AG04450 (cell line): ENCODE measurements at regions of chr12 and their contacts with region 1.

Region 1: GRCh38 chr12:49069507-49070346 is at the start of gene RHEBL1:
- DNase-seq: peak; percentile 78
- H3K4me3 ChIP-seq: peak within 1 kb of the TSS; percentile 82
- H3K27ac ChIP-seq: peak within 1 kb of the TSS; percentile 70
- H3K27me3 ChIP-seq: no peaks in the 10 kb centered on the region
- CTCF ChIP-seq: peak; percentile 16; the same call in 1 of the 2 replicates
- polyA plus RNA-seq, gene RHEBL1: 0.31 and 0.51 TPM in 2 replicates

Region 2: GRCh38 chr12:48991247-48992050 is 78.3 kb before region 1 on chr12:
- CTCF ChIA-PET with region 1: no interaction called
- POLR2A ChIA-PET with region 1: no interaction called
- DNase-seq: no peak
- H3K4me3 ChIP-seq: no peak overlapping the region
- H3K27ac ChIP-seq: no peak overlapping the region
- H3K27me3 ChIP-seq: peaks cover 39% of the 10 kb centered on the region
- CTCF ChIP-seq: no peak

Region 3: GRCh38 chr12:49055981-49056754 is 13.6 kb before region 1 on chr12:
- CTCF ChIA-PET with region 1: interaction called, 12 read pairs
- POLR2A ChIA-PET with region 1: no interaction called
- DNase-seq: peak; percentile 49
- H3K4me3 ChIP-seq: peak overlapping the region; percentile 83
- H3K27ac ChIP-seq: no peak overlapping the region
- H3K27me3 ChIP-seq: no peaks in the 10 kb centered on the region
- CTCF ChIP-seq: no peak

Region 4: GRCh38 chr12:49079793-49080192 is 10.1 kb after region 1 on chr12:
- CTCF ChIA-PET with region 1: interaction called, 20 read pairs
- POLR2A ChIA-PET with region 1: interaction called, 3 read pairs
- DNase-seq: no peak
- H3K4me3 ChIP-seq: no peak overlapping the region
- H3K27ac ChIP-seq: no peak overlapping the region
- H3K27me3 ChIP-seq: peaks cover 2% of the 10 kb centered on the region
- CTCF ChIP-seq: no peak

Region 5: GRCh38 chr12:49098035-49098451 is 28.3 kb after region 1 on chr12:
- CTCF ChIA-PET with region 1: interaction called, 48 read pairs
- POLR2A ChIA-PET with region 1: interaction called, 6 read pairs
- DNase-seq: no peak
- H3K4me3 ChIP-seq: no peak overlapping the region
- H3K27ac ChIP-seq: no peak overlapping the region
- H3K27me3 ChIP-seq: peaks cover 5% of the 10 kb centered on the region
- CTCF ChIP-seq: peak; percentile 81

Region 6: GRCh38 chr12:49110464-49111155 is 40.9 kb after region 1 on chr12 and contains the start of gene LMBR1L:
- CTCF ChIA-PET with region 1: interaction called, 12 read pairs
- POLR2A ChIA-PET with region 1: interaction called, 3 read pairs
- DNase-seq: peak; percentile 95
- H3K4me3 ChIP-seq: peak within 1 kb of the TSS; percentile 82
- H3K27ac ChIP-seq: peak within 1 kb of the TSS; percentile 87
- H3K27me3 ChIP-seq: no peaks in the 10 kb centered on the region
- CTCF ChIP-seq: peak; percentile 59
- polyA plus RNA-seq, gene LMBR1L: 34.1 and 37.3 TPM in 2 replicates

Region 7: DNA sequence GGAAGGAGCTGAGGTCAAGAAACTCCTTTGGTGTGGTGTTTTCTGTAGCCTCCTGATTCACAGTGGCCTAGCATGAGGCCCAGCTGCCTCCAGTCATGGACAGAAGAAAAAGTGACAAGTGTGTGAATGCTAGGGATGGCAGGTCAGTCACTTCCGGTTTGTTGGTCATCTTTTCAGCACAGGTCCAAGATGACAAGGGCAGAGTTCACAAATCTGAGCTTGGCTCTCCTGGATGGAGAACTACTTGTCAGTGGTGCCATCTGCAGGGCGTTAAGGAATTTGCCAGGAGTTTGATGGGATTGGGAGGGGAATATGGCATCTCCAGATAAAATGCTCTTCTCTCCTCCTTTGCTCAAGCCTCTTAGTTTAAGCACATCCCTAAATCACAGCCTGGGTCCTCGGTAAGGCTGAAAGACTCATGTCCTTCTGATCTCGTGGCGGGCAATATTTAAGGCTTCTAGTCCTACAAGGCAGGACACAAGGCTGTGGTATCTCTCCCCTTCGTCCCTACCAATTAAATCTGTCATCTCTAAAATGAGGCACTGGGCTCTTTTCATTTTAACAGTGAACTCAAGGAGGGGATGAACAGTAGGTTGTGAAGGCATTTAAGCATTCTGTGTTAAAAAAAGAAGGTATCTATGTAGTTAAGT is 51.4 kb after region 1 on chr12:
- CTCF ChIA-PET with region 1: interaction called, 53 read pairs
- POLR2A ChIA-PET with region 1: no interaction called
- DNase-seq: no peak
- H3K4me3 ChIP-seq: no peak overlapping the region
- H3K27ac ChIP-seq: no peak overlapping the region
- H3K27me3 ChIP-seq: no peaks in the 10 kb centered on the region
- CTCF ChIP-seq: peak; percentile 76